Activated T-helper 2 cell treated with anti-CD3 and anti-CD28 coated beads, Interferon-gamma antibody, Interleukin-2, Interleukin-4, amounts not matched to agents 10 μg/mL and 5 μg/mL and 100 μg/mL, durations not matched to agents 14 hours and 24 hours and 36 hours (primary cell): ENCODE measurements at regions of chr14 and their contacts with region 1.

Region 1: GRCh38 chr14:55671641-55672040 is 91.6 kb downstream of the KTN1 start:
- DNase-seq: no peak
- H3K4me3 Mint-ChIP-seq: no peak overlapping the region
- H3K27ac Mint-ChIP-seq: no peak overlapping the region
- H3K4me1 Mint-ChIP-seq: no peaks in the 10 kb centered on the region
- H3K27me3 Mint-ChIP-seq: no peaks in the 10 kb centered on the region

Region 2: DNA sequence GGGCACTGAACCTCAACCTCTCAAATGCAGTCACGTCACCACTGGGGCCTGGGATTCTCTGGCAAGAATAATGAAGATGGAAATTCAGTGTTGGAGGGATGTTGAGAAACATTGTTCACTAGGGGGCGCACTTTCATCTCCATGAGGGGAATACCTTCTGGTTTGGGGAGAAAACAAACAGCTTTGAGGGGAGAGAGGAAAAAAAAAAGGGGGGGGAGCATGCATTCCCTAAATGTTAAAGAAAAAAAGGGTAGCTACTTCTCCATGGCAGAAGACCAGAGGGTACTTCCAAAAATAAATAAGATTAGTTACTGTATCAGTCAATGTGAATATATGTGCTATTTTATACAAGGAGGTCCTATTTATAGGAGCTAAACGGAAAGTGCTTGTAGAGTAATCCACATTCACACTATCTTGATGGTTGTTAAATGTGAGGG is 225.4 kb before region 1 on chr14:
- intact Hi-C with region 1: loop called (anchors 10 kb)
- DNase-seq: peak; percentile 22
- H3K4me3 Mint-ChIP-seq: no peak overlapping the region
- H3K27ac Mint-ChIP-seq: no peak overlapping the region
- H3K4me1 Mint-ChIP-seq: peaks cover 23% of the 10 kb centered on the region
- H3K27me3 Mint-ChIP-seq: no peaks in the 10 kb centered on the region

Region 3: DNA sequence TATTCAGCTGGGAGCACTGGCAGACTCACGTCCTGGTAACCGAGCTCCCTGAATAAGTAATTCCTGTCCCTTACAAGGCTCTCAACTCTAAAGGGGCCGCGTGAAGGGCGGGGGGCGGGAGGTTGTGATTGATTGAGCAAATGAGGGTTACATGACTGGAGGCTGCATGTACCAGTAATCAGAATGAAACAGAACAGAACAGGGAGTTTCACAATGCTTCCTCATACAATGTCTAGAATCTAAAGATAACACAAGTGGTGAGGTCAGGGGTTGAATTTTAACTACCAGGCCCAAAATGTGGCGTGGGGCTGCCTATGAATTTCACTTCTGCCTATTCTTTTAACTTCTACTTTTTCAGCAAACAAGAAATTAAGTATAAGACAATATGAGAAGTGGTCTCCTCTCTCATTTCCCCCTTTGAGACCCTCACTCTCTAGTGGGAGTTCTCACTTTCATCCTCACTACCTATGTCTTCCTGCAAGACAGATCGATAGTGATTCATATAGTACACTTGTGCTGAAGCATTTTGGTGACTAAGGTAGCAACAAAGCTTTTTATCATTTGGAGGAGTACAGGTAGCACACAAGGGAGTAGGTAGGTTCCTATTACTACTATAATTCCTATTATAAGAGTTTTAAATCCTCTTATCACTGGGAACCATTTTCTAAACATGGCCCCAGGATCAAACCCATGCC is 148.1 kb after region 1 on chr14:
- intact Hi-C with region 1: no loop called
- DNase-seq: no peak
- H3K4me3 Mint-ChIP-seq: no peak overlapping the region
- H3K27ac Mint-ChIP-seq: no peak overlapping the region
- H3K4me1 Mint-ChIP-seq: peaks cover 1% of the 10 kb centered on the region
- H3K27me3 Mint-ChIP-seq: peaks cover 16% of the 10 kb centered on the region

Region 4: GRCh38 chr14:56412468-56413434 is 741.1 kb after region 1 on chr14:
- intact Hi-C with region 1: no loop called
- DNase-seq: no peak
- H3K4me3 Mint-ChIP-seq: peak overlapping the region; percentile 66
- H3K27ac Mint-ChIP-seq: no peak overlapping the region
- H3K4me1 Mint-ChIP-seq: peaks cover 8% of the 10 kb centered on the region
- H3K27me3 Mint-ChIP-seq: peaks cover 22% of the 10 kb centered on the region